ENCODE measurements at regions of chr11 and their contacts with region 1.

Region 1: GRCh38 chr11:126716456-126717083 is 284.0 kb downstream of the KIRREL3 start:
- DNase-seq: no peak
- ATAC-seq: peak; percentile 90
- H3K4me3 ChIP-seq: no peak overlapping the region
- H3K27ac ChIP-seq: no peak overlapping the region
- H3K4me1 ChIP-seq: no peaks in the 10 kb centered on the region
- H3K27me3 ChIP-seq: peaks cover 3 to 16% of the 10 kb centered on the region in 2 experiments
- CTCF ChIP-seq: peak; percentile 76 to 80 (median 79)
- EP300 ChIP-seq: no peak
- POLR2A ChIP-seq: no peak
- RAD21 ChIP-seq: peak; percentile 86

Region 2: DNA sequence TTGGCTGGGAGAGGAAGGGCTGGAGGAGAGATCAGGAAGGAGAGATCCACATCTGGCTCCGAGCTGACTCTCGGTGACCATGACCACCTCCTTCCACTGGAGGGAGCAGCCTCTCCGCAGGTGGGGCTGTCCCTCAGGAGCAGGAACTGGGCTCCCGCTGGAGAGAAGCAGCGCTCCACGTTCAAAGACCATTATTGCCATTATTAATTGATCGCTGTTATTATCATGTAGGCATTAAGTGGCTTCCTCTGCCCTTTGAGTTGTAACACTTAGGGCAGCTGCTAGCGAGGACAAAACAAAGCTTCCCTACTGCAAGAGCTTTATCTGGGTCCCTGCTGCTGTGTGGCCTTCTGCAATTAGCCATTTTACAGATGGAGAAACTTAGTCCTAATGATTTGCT is 109.2 kb before region 1 on chr11:
- CTCF ChIA-PET with region 1: interaction called, 6 read pairs
- POLR2A ChIA-PET with region 1: no interaction called
- RAD21 ChIA-PET with region 1: no interaction called
- SMC1A ChIA-PET with region 1: no interaction called
- in situ Hi-C with region 1: no loop called
- intact Hi-C with region 1: loop called (anchors 2 kb)
- DNase-seq: no peak
- ATAC-seq: peak; percentile 93
- H3K4me3 ChIP-seq: no peak overlapping the region
- H3K27ac ChIP-seq: no peak overlapping the region
- H3K4me1 ChIP-seq: no peaks in the 10 kb centered on the region
- H3K27me3 ChIP-seq: peaks cover 2% of the 10 kb centered on the region in 2 experiments; a peak in 2 of 4 replicates
- CTCF ChIP-seq: peak; percentile 50 to 77 (median 74); a peak in 5 of 6 replicates
- EP300 ChIP-seq: no peak
- POLR2A ChIP-seq: no peak
- RAD21 ChIP-seq: peak; percentile 51

Region 3: GRCh38 chr11:126732981-126733380 is 16.4 kb after region 1 on chr11:
- CTCF ChIA-PET with region 1: interaction called, 21 read pairs
- POLR2A ChIA-PET with region 1: no interaction called
- RAD21 ChIA-PET with region 1: no interaction called
- SMC1A ChIA-PET with region 1: interaction called, 5 read pairs
- in situ Hi-C with region 1: no loop called
- intact Hi-C with region 1: no loop called
- DNase-seq: peak; percentile 11
- ATAC-seq: peak; percentile 76
- H3K4me3 ChIP-seq: peak overlapping the region; percentile 0; the same call in 1 of the 2 replicates
- H3K27ac ChIP-seq: peak overlapping the region; percentile 60
- H3K4me1 ChIP-seq: peaks cover 40% of the 10 kb centered on the region
- H3K27me3 ChIP-seq: no peaks in the 10 kb centered on the region; a peak in 2 of 4 replicates
- CTCF ChIP-seq: no peak
- EP300 ChIP-seq: no peak
- POLR2A ChIP-seq: no peak
- RAD21 ChIP-seq: no peak

Region 4: DNA sequence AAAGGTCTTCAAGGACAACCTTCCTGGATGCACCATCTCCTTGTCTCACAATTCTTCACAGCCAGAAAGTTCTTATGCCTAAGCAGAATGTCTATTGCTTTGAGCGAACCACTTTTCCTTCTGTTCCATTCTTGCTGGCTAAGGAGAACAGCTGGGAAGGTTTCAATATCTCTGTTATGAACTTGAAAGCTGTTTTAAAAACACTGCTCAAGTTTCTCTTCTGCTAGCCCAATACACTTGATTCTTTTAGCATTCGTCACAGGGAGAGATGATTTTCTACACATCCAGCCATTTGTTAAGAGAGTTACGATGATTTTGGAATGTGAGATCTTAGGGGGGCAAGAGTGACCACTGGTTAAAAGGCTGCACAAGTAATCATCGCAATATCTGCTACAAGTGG is 34.7 kb after region 1 on chr11:
- CTCF ChIA-PET with region 1: no interaction called
- POLR2A ChIA-PET with region 1: no interaction called
- RAD21 ChIA-PET with region 1: no interaction called
- SMC1A ChIA-PET with region 1: no interaction called
- in situ Hi-C with region 1: no loop called
- intact Hi-C with region 1: no loop called
- DNase-seq: no peak
- ATAC-seq: no peak
- H3K4me3 ChIP-seq: no peak overlapping the region
- H3K27ac ChIP-seq: no peak overlapping the region
- H3K4me1 ChIP-seq: no peaks in the 10 kb centered on the region
- H3K27me3 ChIP-seq: 0 out of 4 replicates have a peak, but pooled peaks cover 0 to 4% of the 10 kb centered on the region in 2 experiments
- CTCF ChIP-seq: no peak
- EP300 ChIP-seq: no peak
- POLR2A ChIP-seq: no peak
- RAD21 ChIP-seq: no peak

Region 5: DNA sequence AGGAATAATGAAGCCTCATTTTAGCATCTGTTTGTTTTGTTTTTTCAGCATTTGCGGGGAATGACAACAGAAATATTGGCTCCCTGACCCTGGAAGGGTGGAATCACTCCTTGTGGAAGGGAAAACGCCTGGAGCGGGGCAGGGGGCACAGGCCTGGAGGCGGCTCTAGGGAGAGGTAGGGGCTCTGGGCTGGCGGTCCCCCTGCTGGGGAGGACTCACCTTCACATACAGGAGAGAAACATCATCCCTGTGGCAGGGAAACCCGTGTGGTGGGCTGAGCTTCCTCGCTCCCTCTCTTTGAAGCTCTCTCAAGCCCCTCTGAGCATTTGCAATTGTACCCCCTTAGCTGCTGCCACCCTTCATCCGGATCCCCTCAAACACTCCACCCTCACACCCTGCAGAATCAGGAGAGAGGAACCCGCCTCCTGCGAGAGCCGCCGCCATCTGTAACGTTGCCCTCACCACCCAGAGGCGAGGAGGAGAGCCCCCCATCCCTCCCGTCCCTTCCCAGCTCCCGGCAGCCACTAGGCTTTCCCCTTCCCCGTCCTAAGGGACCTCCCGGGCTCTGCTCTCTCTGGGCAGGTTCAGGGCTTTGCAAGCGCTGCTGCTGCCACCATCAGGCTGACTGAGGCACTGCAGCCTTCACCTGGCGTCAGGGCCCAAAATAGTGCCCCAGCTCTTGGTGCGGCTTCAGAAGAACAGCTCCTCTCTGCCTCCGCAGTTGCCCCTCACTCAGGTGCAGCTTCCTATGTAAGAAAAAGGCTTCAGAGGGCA is 273.6 kb after region 1 on chr11:
- CTCF ChIA-PET with region 1: interaction called, 68 read pairs
- POLR2A ChIA-PET with region 1: interaction called, 3 read pairs
- RAD21 ChIA-PET with region 1: interaction called, 11 read pairs
- SMC1A ChIA-PET with region 1: interaction called, 40 read pairs
- in situ Hi-C with region 1: loop called (anchors 5 kb)
- intact Hi-C with region 1: loop called (anchors 1 kb)
- DNase-seq: no peak
- ATAC-seq: peak; percentile 98
- H3K4me3 ChIP-seq: no peak overlapping the region
- H3K27ac ChIP-seq: no peak overlapping the region
- H3K4me1 ChIP-seq: no peaks in the 10 kb centered on the region
- H3K27me3 ChIP-seq: peaks cover 0 to 12% of the 10 kb centered on the region in 2 experiments; a peak in 3 of 4 replicates
- CTCF ChIP-seq: peak; percentile 94 to 98 (median 94)
- EP300 ChIP-seq: no peak
- POLR2A ChIP-seq: no peak
- RAD21 ChIP-seq: peak; percentile 90

Region 6: GRCh38 chr11:127345819-127346459 is 629.4 kb after region 1 on chr11:
- CTCF ChIA-PET with region 1: interaction called, 17 read pairs
- POLR2A ChIA-PET with region 1: no interaction called
- RAD21 ChIA-PET with region 1: interaction called, 6 read pairs
- SMC1A ChIA-PET with region 1: interaction called, 9 read pairs
- in situ Hi-C with region 1: no loop called
- intact Hi-C with region 1: loop called (anchors 5 kb)
- DNase-seq: no peak
- ATAC-seq: peak; percentile 52
- H3K4me3 ChIP-seq: no peak overlapping the region
- H3K27ac ChIP-seq: no peak overlapping the region
- H3K4me1 ChIP-seq: no peaks in the 10 kb centered on the region
- H3K27me3 ChIP-seq: no peaks in the 10 kb centered on the region; a peak in 1 of 4 replicates
- CTCF ChIP-seq: peak; percentile 67 to 76 (median 74)
- EP300 ChIP-seq: no peak
- POLR2A ChIP-seq: no peak
- RAD21 ChIP-seq: peak; percentile 57

Measured in GM12878 (cell line).